HEK293T (cell line): ENCODE measurements at regions of chr19 and their contacts with region 1.

Region 1: DNA sequence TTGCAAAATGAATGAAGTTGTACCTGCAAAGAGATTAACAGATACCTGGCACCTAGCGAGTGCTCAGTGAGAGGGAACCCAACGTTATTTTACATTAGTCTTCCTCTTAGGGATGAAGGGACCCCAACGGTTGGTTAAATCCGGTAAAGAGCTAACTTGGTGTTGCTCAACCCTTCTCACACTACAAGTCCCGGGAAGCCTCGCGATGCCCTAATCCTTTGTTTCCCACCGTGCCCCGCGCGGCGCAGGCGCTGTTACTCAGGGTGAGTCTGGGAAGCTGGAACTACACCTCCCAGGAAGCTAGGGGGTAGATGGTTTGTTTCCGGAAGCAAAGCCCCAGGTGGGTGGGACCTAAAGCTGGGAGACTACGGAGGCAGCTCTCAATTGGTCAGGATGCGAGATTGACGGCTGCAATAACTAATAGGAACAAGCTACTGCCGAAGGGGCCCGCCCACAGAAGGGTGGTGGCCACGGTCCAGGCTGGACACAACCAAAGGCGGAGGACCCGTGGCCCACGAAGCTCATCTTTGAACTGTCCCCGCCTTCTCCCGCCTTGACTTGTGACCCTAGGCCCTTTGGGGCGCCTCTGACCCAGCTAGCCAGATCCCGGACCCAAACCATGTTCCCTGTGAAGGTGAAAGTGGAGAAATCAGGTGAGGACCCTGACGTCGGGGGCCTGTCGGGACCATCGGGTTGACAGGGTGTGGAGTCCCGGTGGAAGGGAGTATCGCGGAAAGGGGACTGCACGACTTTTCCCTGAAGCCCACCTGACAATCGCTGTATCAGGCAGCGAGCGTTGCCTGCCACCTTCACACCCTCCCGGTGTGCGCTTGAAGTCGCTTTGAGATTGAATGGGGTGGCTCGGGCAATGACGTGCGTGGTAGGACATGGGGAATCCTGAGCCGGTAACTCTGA is at the start of gene LIN37:
- DNase-seq: peak; percentile 92

Region 2: GRCh38 chr19:35702223-35703012 is 45.9 kb before region 1 on chr19:
- CTCF ChIA-PET with region 1: interaction called, 3 read pairs
- POLR2A ChIA-PET with region 1: interaction called, 15 read pairs
- DNase-seq: peak; percentile 94

Region 3: GRCh38 chr19:35718341-35719041 is 29.9 kb before region 1 on chr19:
- CTCF ChIA-PET with region 1: no interaction called
- POLR2A ChIA-PET with region 1: interaction called, 10 read pairs
- DNase-seq: peak; percentile 30

Region 4: DNA sequence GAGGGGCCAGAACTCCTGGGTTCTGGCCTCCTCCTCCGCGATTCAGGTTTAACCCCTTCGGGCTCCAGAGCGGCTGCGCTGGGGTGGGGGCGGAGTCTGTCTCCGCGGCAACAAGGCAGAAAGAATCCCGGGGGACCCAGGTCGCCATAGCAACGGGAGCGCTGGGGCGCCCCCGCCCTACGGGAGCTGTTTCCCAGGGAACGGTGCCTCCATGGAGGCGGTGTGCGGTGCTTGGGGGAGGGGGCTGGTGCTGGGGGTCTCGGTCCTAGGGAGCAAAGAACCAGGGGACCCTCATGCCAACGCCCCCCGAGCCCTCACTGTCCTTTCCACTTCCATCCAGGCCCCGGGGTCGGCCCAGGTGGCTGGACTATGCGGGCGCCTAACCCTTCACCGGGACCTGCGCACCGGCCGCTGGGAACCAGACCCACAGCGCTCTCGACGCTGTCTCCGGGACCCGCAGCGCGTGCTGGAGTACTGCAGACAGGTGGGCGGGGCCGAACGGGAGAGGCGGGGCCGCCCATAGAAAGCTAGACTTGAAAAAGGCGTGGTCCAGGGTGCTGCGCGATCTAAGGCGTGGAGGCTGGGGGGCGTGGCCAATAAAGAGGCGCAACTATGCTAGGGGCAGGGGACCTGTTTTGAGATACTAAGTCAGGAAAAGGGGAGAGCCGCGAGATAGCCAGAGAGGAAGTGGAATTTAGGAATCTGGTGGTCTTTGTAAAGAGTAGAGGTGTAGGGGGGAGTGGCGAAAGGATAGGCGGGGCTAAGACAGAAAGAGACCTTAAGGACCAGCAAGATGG is 121.2 kb after region 1 on chr19:
- CTCF ChIA-PET with region 1: no interaction called
- POLR2A ChIA-PET with region 1: interaction called, 10 read pairs
- DNase-seq: peak; percentile 90